SK-N-SH (cell line): ENCODE measurements at regions of chr11 and their contacts with region 1.

Region 1: GRCh38 chr11:64204464-64204989 is 2.0 kb upstream of the FERMT3 start:
- DNase-seq: peak; percentile 89
- H3K4me3 ChIP-seq: no peak overlapping the region
- H3K27ac ChIP-seq: peak overlapping the region in 1 of 2 experiments; percentile 6; a peak in 1 of 4 replicates
- H3K4me1 ChIP-seq: peaks cover 4 to 27% of the 10 kb centered on the region in 2 experiments; a peak in 3 of 4 replicates
- H3K27me3 ChIP-seq: no peaks in the 10 kb centered on the region
- CTCF ChIP-seq: peak; percentile 85
- EP300 ChIP-seq: no peak
- RAD21 ChIP-seq: peak; percentile 84

Region 2: DNA sequence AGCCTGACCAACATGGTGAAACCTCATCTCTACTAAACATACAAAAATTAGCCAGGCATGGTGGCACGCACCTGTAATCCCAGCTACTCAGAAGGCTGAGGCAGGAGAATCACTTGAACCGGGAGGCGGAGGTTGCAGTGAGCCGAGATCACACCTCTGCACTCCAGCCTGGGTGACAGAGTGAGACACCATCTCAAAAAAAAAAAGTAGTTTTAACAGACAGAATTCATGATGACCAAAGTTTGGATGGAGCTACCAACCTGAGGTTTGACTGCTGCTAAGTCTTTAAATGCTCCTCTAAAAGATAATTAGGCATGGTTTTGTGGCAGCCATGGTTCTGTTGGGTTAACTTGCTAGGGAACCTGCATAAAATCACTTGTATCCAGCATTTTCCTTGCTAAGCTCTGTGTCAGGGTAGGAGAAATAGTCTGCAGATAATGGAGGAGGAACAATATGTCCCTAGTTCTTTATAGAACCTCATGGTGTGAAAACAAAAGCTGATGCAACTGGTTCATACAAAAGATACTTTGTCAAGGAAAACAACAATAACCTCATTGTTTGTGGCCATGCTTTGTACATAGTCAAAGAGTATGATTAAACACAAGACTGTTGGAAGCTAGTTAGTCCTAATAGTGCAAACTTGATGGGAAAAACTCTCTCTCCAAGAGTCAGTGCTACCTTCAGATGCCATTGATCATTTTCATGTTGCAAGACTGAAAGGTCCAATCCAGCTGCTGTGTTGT is 621.4 kb before region 1 on chr11:
- CTCF ChIA-PET with region 1: no interaction called
- POLR2A ChIA-PET with region 1: no interaction called
- DNase-seq: no peak
- H3K4me3 ChIP-seq: no peak overlapping the region
- H3K27ac ChIP-seq: no peak overlapping the region
- H3K4me1 ChIP-seq: no peaks in the 10 kb centered on the region
- H3K27me3 ChIP-seq: no peaks in the 10 kb centered on the region
- CTCF ChIP-seq: no peak
- EP300 ChIP-seq: no peak
- RAD21 ChIP-seq: no peak

Region 3: GRCh38 chr11:64216879-64217278 is 12.4 kb after region 1 on chr11:
- CTCF ChIA-PET with region 1: interaction called, 50 read pairs
- POLR2A ChIA-PET with region 1: interaction called, 5 read pairs
- DNase-seq: peak; percentile 25
- H3K4me3 ChIP-seq: no peak overlapping the region
- H3K27ac ChIP-seq: no peak overlapping the region
- H3K4me1 ChIP-seq: peaks cover 3 to 13% of the 10 kb centered on the region in 2 experiments; a peak in 1 of 4 replicates
- H3K27me3 ChIP-seq: no peaks in the 10 kb centered on the region
- CTCF ChIP-seq: no peak; the same call in 1 of the 2 replicates
- EP300 ChIP-seq: no peak
- RAD21 ChIP-seq: no peak

Region 4: DNA sequence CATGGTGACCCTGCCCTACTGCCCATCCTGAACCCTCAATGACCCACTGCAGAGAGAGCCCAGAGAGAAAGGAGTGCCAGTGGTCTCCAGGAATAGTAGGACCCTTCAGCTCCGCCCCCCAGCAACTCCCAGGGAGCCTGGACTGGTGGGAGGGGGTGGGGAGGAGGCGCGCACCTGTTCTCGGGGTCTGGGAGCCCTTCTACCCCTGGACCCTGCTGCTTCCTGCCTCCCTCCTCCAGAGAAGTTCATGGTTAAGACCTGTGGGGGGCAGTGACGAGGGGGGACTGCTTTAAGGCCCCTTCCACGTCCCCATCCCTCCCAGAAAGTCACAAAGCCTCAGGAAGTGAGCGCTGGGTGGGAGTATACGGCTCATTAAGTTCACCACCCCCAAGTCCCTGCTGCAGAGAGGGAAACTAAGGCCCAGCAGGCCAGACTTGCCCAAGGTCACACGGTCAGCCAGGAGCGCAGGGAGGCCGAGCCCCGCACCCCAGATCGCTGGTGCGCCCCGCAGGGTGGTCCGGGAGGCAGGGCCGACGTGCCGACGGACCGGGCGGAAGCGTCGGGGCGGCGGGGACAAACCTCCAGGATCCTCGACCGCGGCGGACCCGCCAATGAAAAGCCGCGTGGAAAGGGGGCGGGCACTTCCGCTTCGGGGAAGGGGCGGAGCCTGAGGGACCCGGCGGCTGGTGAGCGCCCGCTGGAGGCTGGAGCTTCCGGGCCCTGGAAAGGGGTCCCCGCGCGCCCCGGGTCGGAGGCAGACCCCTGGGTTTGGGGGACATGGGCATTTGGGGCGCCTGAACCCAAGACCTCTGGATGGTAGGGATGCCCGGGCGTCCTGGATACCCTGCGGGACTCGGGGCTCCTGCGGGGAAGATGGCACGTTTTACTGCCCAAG is 21.3 kb after region 1 on chr11 and contains the starts of genes NUDT22 and TRPT1:
- CTCF ChIA-PET with region 1: interaction called, 17 read pairs
- POLR2A ChIA-PET with region 1: interaction called, 6 read pairs
- DNase-seq: peak; percentile 97
- H3K4me3 ChIP-seq: peak within 1 kb of the TSS; percentile 88 to 97
- H3K27ac ChIP-seq: peak within 1 kb of the TSS; percentile 47 to 88
- H3K4me1 ChIP-seq: peaks cover 9 to 34% of the 10 kb centered on the region in 2 experiments; a peak in 2 of 4 replicates
- H3K27me3 ChIP-seq: no peaks in the 10 kb centered on the region
- CTCF ChIP-seq: peak; percentile 16
- EP300 ChIP-seq: no peak
- RAD21 ChIP-seq: no peak
- polyA plus RNA-seq, gene NUDT22: 72.7 and 74.0 TPM in 2 replicates
- polyA plus RNA-seq, gene TRPT1: 61.5 and 62.4 TPM in 2 replicates